Naive thymus-derived CD4-positive, alpha-beta T cell (primary cell): ENCODE measurements at regions of chr7 and their contacts with region 1.

Region 1: GRCh38 chr7:39609113-39609934 is 14.0 kb upstream of the RALA start:
- DNase-seq: peak in 4 of 9 donors; percentile 15 to 21 (median 18)
- ATAC-seq: peak; percentile 68
- H3K4me3 ChIP-seq: peak overlapping the region; percentile 22
- H3K4me3 Mint-ChIP-seq: peak overlapping the region; percentile 64 to 87 (median 76)
- H3K27ac ChIP-seq: no peak overlapping the region
- H3K27ac Mint-ChIP-seq: peak overlapping the region in 8 of 9 donors; percentile 13 to 81 (median 75)
- H3K4me1 ChIP-seq: peaks cover 0 to 22% of the 10 kb centered on the region in 2 donors
- H3K4me1 Mint-ChIP-seq: peaks cover 15 to 64% (median 56%) of the 10 kb centered on the region in 7 donors
- H3K27me3 ChIP-seq: no peaks in the 10 kb centered on the region
- H3K27me3 Mint-ChIP-seq: peaks cover 0 to 28% (median 19%) of the 10 kb centered on the region in 5 donors

Region 2: GRCh38 chr7:39589323-39590111 is 19.8 kb before region 1 on chr7:
- CTCF ChIA-PET with region 1: interaction called, 3 read pairs
- POLR2A ChIA-PET with region 1: interaction called, 7 read pairs
- intact Hi-C with region 1: loop called (anchors 1 kb)
- DNase-seq: peak in 8 of 9 donors; percentile 37 to 85 (median 60)
- ATAC-seq: peak; percentile 94
- H3K4me3 ChIP-seq: no peak overlapping the region
- H3K4me3 Mint-ChIP-seq: peak overlapping the region in 6 of 10 donors; percentile 19 to 78 (median 52)
- H3K27ac ChIP-seq: no peak overlapping the region
- H3K27ac Mint-ChIP-seq: peak overlapping the region in 8 of 9 donors; percentile 55 to 90 (median 77)
- H3K4me1 ChIP-seq: peaks cover 5 to 15% of the 10 kb centered on the region in 2 donors
- H3K4me1 Mint-ChIP-seq: peaks cover 10 to 54% (median 26%) of the 10 kb centered on the region in 7 donors
- H3K27me3 ChIP-seq: no peaks in the 10 kb centered on the region
- H3K27me3 Mint-ChIP-seq: no peaks in the 10 kb centered on the region